Activated naive CD4-positive, alpha-beta T cell treated with anti-CD3 and anti-CD28 coated beads, Interleukin-2, amount 10 ng/mL, durations not matched to agents 7 days and 5 days (primary cell): ENCODE measurements at regions of chrX and their contacts with region 1.

Region 1: DNA sequence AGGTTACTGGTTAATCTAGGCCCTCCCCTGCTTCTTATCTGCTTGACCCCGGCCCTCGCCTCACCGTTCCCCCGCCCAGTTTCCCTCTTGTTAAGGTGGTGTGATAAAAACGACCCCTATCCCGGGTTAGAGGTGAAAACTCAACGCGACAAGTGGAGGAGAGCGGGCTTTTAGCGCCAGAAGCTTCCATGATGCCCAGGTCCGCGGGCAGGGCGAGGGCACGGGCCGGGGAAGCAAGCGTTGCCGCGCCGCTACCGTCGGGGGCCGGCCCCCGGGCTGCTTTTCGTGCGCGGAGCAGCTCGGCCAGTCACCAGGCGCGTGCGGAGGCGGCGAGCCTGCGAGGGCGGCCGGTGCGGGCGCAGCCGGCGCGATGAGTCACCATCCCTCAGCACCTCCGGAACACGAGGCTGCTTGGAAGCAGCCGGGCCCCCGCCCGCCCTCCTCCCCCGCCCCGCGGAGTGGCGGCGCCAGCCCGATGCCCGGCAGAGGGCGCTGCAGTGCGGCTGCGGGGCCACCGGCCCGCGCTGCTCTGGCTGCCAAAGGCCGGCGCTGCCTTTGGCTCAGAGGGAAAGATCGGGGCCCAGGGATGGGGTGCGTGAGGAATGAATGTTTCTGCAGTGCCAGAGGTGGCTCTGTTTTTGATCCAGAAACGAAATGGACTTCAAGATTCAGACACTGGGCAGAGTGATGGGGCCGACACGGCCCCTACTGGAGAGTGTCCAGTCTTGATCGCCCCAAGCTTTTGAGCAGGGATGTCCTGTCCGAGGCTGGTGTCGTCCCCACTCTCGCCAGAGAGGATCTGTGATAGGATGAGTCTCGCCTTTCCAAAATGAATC is 107.8 kb downstream of the NHSL2 start:
- DNase-seq: peak; percentile 80
- H3K4me3 Mint-ChIP-seq: no peak overlapping the region
- H3K27ac Mint-ChIP-seq: no peak overlapping the region
- H3K4me1 Mint-ChIP-seq: peaks cover 13% of the 10 kb centered on the region
- H3K27me3 Mint-ChIP-seq: peaks cover 76% of the 10 kb centered on the region

Region 2: GRCh38 chrX:71935476-71935875 is 83.0 kb before region 1 on chrX:
- CTCF ChIA-PET with region 1: no interaction called
- DNase-seq: no peak
- H3K4me3 Mint-ChIP-seq: no peak overlapping the region
- H3K27ac Mint-ChIP-seq: no peak overlapping the region
- H3K4me1 Mint-ChIP-seq: no peaks in the 10 kb centered on the region
- H3K27me3 Mint-ChIP-seq: peaks cover 4% of the 10 kb centered on the region

Region 3: GRCh38 chrX:71998836-71999509 is 19.5 kb before region 1 on chrX:
- CTCF ChIA-PET with region 1: interaction called, 10 read pairs
- DNase-seq: peak; percentile 38
- H3K4me3 Mint-ChIP-seq: no peak overlapping the region
- H3K27ac Mint-ChIP-seq: no peak overlapping the region
- H3K4me1 Mint-ChIP-seq: no peaks in the 10 kb centered on the region
- H3K27me3 Mint-ChIP-seq: peaks cover 45% of the 10 kb centered on the region

Region 4: GRCh38 chrX:72029483-72030411 is 11.3 kb after region 1 on chrX:
- CTCF ChIA-PET with region 1: interaction called, 11 read pairs
- DNase-seq: no peak
- H3K4me3 Mint-ChIP-seq: no peak overlapping the region
- H3K27ac Mint-ChIP-seq: no peak overlapping the region
- H3K4me1 Mint-ChIP-seq: no peaks in the 10 kb centered on the region
- H3K27me3 Mint-ChIP-seq: peaks cover 20% of the 10 kb centered on the region

Region 5: DNA sequence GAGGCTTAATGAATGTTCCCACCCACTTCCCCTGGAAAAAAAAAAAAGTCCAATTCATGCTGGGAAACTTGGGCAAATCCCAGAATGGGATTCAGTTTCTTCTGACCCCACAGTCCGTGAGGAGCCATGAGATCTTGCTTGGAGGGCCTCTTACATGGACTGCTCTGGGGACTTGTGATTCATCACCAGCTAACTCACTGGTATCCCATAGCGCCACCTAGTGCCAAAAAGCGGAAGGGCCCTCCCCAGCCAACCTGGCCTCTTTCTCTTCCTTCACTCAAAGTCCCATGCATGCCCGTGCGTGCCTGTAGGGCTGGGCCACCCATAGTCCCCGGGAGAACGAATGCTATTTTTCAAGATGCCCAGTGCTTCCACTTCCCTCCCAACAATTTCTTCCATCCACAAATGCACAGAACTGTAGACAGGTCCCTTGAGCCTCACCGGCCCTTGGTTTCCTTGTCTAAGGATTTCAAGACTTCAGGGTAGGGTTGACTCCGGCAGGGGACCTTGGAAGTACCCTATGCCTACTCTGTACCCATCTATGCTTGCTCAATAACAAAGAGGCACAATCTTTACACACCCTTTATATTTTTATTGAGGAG is 108.1 kb after region 1 on chrX:
- CTCF ChIA-PET with region 1: interaction called, 91 read pairs
- DNase-seq: peak; percentile 86
- H3K4me3 Mint-ChIP-seq: no peak overlapping the region
- H3K27ac Mint-ChIP-seq: peak overlapping the region; percentile 64
- H3K4me1 Mint-ChIP-seq: peaks cover 18% of the 10 kb centered on the region
- H3K27me3 Mint-ChIP-seq: peaks cover 85% of the 10 kb centered on the region